ENCODE measurements at regions of chr7 and their contacts with region 1.

Region 1: DNA sequence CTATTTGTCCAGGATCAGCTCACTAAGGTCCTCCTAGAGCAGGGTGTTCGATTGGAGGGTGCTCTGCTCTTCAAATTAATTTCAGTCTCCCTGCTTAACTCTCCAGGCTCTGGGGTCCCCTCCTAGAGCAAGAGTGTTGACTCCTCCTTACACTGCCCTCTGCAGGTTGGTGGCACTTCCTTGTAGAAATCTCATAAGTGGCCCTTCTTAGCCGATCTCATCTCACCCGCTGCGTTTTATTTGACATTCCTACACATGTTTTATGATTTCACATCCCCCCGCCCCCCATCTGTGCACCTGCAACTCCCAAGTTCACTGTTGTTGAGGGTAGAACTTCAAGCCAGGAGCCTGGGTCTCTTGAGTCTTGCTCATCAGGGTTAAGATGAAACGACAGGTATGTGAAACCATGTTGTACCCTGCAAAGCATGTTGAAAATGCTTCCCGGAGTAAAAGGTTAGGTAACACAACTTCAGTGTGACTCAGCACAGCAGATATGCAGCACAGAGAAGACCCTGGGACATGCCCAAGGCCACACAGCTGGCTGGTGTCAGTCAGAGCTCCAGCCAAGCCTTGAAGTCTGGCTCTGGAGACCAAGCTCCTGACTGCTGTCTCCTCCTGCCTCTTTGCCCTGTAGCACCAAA is 171.2 kb downstream of the PRKAG2 start:
- DNase-seq: peak; percentile 61 to 81
- ATAC-seq: peak; percentile 63 to 88
- H3K4me3 ChIP-seq: no peak overlapping the region
- H3K27ac ChIP-seq: peak overlapping the region; percentile 64 to 80
- H3K4me1 ChIP-seq: peaks cover 27% of the 10 kb centered on the region
- CTCF ChIP-seq: peak; percentile 78
- EP300 ChIP-seq: no peak
- POLR2A ChIP-seq: no peak
- RAD21 ChIP-seq: peak; percentile 74 to 79

Region 2: DNA sequence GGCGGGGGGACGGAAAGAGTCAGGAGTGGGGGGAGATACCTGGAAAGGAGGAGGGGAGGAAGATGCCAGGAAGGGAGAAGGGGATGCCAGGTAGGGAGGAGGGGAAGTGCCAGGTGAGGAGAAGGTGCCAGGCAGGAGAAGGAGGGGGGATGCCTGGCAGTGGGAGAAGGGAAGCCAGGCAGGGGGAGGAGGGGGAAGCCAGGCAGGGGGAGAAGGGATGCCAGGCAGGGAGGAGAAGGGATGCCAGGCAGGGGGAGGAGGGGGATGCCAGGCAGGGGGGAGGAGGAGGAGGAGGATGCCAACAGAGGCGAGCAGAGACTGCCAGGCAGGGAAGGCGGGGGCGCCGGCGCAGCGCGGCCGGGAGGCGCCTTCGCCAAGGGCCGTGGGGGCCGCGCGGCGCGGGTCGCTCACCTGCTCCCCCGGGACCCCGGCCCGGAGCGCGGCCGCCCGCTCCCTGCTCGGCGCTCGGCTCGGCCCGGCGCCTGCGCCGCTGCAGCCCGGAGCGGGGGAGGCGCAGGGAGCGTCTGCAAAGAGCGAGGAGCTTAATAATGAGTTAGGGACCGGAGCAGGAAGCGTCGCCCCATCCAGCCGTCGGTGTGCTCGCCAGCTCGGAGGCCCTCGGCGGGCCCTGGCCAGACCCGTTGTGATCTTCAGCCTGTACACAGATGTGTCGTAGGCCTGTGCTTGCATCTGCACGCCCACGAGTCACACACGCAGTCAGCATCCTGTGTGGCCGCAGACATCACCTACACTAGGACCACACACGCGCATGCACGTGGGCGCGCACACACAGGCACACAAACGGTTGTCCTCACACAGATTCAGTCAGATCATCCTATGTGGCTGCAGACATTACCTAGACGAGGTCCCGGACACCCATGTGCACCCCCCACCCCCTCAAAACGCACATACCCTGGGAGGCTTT is 428.8 kb before region 1 on chr7:
- CTCF ChIA-PET with region 1: no interaction called
- POLR2A ChIA-PET with region 1: no interaction called
- DNase-seq: peak; percentile 61 to 66
- ATAC-seq: peak; percentile 75 to 88
- H3K4me3 ChIP-seq: peak overlapping the region; percentile 79
- H3K27ac ChIP-seq: peak overlapping the region; percentile 78 to 95
- H3K4me1 ChIP-seq: peaks cover 12% of the 10 kb centered on the region; the same call in 2 of the 3 replicates
- CTCF ChIP-seq: no peak
- EP300 ChIP-seq: no peak
- POLR2A ChIP-seq: peak; percentile 63
- RAD21 ChIP-seq: no peak

Region 3: GRCh38 chr7:151570366-151570915 is 135.3 kb before region 1 on chr7:
- CTCF ChIA-PET with region 1: interaction called, 29 read pairs
- POLR2A ChIA-PET with region 1: no interaction called
- DNase-seq: peak in 1 of 2 experiments; percentile 25
- ATAC-seq: no peak
- H3K4me3 ChIP-seq: no peak overlapping the region
- H3K27ac ChIP-seq: peak overlapping the region in 1 of 2 experiments; percentile 32; a peak in 1 of 6 replicates
- H3K4me1 ChIP-seq: no peaks in the 10 kb centered on the region; the same call in 2 of the 3 replicates
- CTCF ChIP-seq: peak; percentile 84
- EP300 ChIP-seq: no peak
- POLR2A ChIP-seq: no peak
- RAD21 ChIP-seq: peak; percentile 89 to 91

Region 4: GRCh38 chr7:151687523-151688218 is 18.1 kb before region 1 on chr7:
- CTCF ChIA-PET with region 1: interaction called, 17 read pairs
- POLR2A ChIA-PET with region 1: no interaction called
- DNase-seq: peak; percentile 96 to 99
- ATAC-seq: peak; percentile 87 to 95
- H3K4me3 ChIP-seq: no peak overlapping the region
- H3K27ac ChIP-seq: peak overlapping the region; percentile 82 to 93
- H3K4me1 ChIP-seq: peaks cover 52% of the 10 kb centered on the region
- CTCF ChIP-seq: no peak
- EP300 ChIP-seq: peak; percentile 49 to 81; a peak in 3 of 5 replicates
- POLR2A ChIP-seq: no peak
- RAD21 ChIP-seq: peak; percentile 27 to 42; a peak in 4 of 5 replicates

Region 5: DNA sequence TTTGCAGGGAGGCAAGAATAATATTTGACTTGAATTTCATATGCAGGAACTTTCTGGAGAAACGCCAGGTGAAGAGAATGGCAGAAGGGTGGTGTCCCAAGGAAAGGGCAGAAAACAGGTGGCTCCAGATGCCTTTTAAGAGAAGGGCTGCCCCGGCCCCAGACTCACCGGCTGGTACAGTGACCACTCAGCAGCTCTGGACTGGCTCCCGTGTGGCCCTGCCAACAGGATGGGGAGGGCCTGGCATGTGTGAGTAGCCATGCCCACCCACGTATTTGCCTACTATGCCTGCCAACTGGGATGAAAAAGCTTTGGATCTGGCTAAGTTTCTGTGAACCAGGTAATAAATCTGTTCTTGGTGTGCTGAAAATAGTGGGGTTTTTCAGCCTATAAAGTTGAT is 11.7 kb after region 1 on chr7:
- CTCF ChIA-PET with region 1: interaction called, 20 read pairs
- POLR2A ChIA-PET with region 1: no interaction called
- DNase-seq: no peak
- ATAC-seq: no peak
- H3K4me3 ChIP-seq: no peak overlapping the region
- H3K27ac ChIP-seq: peak overlapping the region in 1 of 2 experiments; percentile 29; a peak in 3 of 6 replicates
- H3K4me1 ChIP-seq: peaks cover 31% of the 10 kb centered on the region
- CTCF ChIP-seq: no peak
- EP300 ChIP-seq: no peak
- POLR2A ChIP-seq: no peak
- RAD21 ChIP-seq: no peak

Region 6: GRCh38 chr7:151775547-151776443 is 70.0 kb after region 1 on chr7:
- CTCF ChIA-PET with region 1: no interaction called
- POLR2A ChIA-PET with region 1: no interaction called
- DNase-seq: no peak
- ATAC-seq: no peak
- H3K4me3 ChIP-seq: no peak overlapping the region
- H3K27ac ChIP-seq: no peak overlapping the region
- H3K4me1 ChIP-seq: no peaks in the 10 kb centered on the region
- CTCF ChIP-seq: no peak
- EP300 ChIP-seq: no peak
- POLR2A ChIP-seq: no peak
- RAD21 ChIP-seq: no peak